ENCODE measurements at regions of chr19 and their contacts with region 1.

Region 1: DNA sequence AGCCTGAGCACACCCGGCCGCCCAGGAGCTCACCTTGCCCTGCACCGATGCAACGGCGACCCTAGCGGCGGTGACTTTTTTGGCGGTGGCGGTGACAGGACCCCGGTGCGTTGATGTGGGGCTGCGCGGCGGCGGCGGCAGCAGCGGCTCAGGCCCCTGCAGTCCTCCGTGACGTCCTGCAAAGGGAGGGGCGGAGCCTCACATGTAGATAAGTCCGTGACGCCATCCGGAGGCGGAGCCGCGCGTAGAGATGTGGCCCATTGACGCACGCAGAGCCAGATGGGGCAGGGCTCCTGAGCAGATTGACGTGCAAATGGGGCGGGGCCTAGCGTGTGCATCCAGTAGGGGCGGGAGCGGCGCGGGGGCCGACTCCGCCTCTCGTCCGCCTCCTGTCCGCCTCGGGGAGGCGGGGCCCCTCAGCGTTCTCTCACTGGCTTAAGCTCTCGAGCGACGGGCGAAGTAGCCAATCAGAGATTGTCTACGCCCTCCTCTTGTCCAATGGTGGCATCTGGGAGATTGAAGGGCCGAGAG is at the start of gene RAB3A:
- DNase-seq: peak; percentile 100
- ATAC-seq: peak; percentile 93
- H3K4me3 ChIP-seq: peak within 1 kb of the TSS; percentile 74 to 91 (median 80)
- H3K27ac ChIP-seq: peak within 1 kb of the TSS; percentile 98 to 100 (median 100)
- H3K4me1 ChIP-seq: peaks cover 6 to 19% of the 10 kb centered on the region in 2 donors
- H3K27me3 ChIP-seq: no peaks in the 10 kb centered on the region
- CTCF ChIP-seq: no peak
- POLR2A ChIP-seq: no peak
- total RNA-seq, gene RAB3A: 0.51 to 2.3 TPM in 2 of 4 donors, not detected in the others

Region 2: GRCh38 chr19:18007044-18007916 is 196.6 kb before region 1 on chr19:
- in situ Hi-C with region 1: no loop called
- intact Hi-C with region 1: loop called (anchors 5 kb)
- DNase-seq: peak; percentile 81 to 84
- ATAC-seq: peak; percentile 61 to 74
- H3K4me3 ChIP-seq: peak overlapping the region; percentile 74 to 99 (median 83)
- H3K27ac ChIP-seq: peak overlapping the region; percentile 89 to 100 (median 95)
- H3K4me1 ChIP-seq: peaks cover under 1 to 12% of the 10 kb centered on the region in 2 donors
- H3K27me3 ChIP-seq: peaks cover 0 to 2% (median 0%) of the 10 kb centered on the region in 3 donors
- CTCF ChIP-seq: peak; percentile 97 to 100 (median 99)
- POLR2A ChIP-seq: peak; percentile 76 to 90

Region 3: DNA sequence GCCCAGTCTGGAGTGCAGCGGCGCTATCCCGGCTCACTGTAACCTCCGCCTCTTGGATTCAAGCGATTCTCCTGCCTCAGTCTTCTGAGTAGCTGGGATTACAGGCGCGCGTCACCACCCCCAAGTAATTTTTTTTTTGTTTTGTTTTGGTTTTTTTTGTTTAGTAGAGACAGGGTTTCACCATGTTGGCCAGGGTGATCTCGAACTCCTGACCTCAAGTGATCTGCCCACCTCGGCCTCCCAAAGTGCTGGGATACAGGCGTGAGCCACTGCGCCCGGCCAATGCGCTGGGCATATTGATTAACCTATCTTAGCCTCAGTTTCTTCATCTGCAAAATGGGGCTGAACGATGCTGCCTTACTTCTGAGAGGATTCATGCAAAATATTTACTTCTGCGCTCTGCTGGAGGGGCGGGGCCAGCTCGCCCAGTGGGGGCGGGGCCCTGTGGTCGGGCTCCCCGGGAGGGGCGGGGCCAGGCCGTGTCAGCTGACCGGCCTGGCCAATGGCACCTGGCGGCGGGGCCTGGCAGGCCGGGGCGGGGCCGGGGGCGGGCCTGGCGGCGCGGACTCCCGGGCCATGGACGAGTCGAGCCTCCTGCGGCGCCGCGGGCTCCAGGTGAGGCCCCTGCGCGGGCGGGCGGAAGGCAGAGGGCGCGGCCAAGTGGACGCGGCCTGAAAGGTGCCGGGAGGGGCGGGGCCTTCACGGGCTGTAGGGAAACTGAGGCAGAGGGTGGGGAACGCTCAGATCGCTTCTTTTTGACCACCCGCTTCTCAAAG is 106.5 kb before region 1 on chr19 and contains the start of gene MAST3:
- in situ Hi-C with region 1: no loop called
- intact Hi-C with region 1: no loop called
- DNase-seq: peak; percentile 45 to 65
- ATAC-seq: peak; percentile 53 to 56
- H3K4me3 ChIP-seq: peak within 1 kb of the TSS in 2 of 4 donors; percentile 28 to 42
- H3K27ac ChIP-seq: no peak within 1 kb of the TSS
- H3K4me1 ChIP-seq: peaks cover 0 to 5% of the 10 kb centered on the region in 2 donors
- H3K27me3 ChIP-seq: peaks cover 36 to 67% (median 44%) of the 10 kb centered on the region in 3 donors
- CTCF ChIP-seq: no peak
- POLR2A ChIP-seq: no peak
- total RNA-seq, gene MAST3: 0.66 to 2.8 (median 1.6) TPM

Region 4: GRCh38 chr19:18192673-18193387 is 11.1 kb before region 1 on chr19 and contains the start of gene MPV17L2:
- in situ Hi-C with region 1: no loop called
- intact Hi-C with region 1: loop called (anchors 1 kb)
- DNase-seq: peak; percentile 100
- ATAC-seq: peak; percentile 96 to 97
- H3K4me3 ChIP-seq: peak within 1 kb of the TSS; percentile 75 to 89 (median 82)
- H3K27ac ChIP-seq: peak within 1 kb of the TSS; percentile 88 to 95 (median 94)
- H3K4me1 ChIP-seq: peaks cover 11 to 14% of the 10 kb centered on the region in 2 donors
- H3K27me3 ChIP-seq: no peaks in the 10 kb centered on the region
- CTCF ChIP-seq: no peak
- POLR2A ChIP-seq: peak; percentile 81 to 83
- total RNA-seq, gene MPV17L2: 18.1 to 38.9 (median 33.0) TPM

Region 5: GRCh38 chr19:18251587-18252369 is 47.9 kb after region 1 on chr19:
- in situ Hi-C with region 1: loop called in 1 of 4 experiments (anchors 5 kb)
- intact Hi-C with region 1: loop called (anchors 1 kb)
- DNase-seq: peak; percentile 15 to 66
- ATAC-seq: peak; percentile 84 to 87
- H3K4me3 ChIP-seq: no peak overlapping the region
- H3K27ac ChIP-seq: no peak overlapping the region
- H3K4me1 ChIP-seq: no peaks in the 10 kb centered on the region
- H3K27me3 ChIP-seq: no peaks in the 10 kb centered on the region
- CTCF ChIP-seq: peak; percentile 94 to 98 (median 97)
- POLR2A ChIP-seq: no peak

Region 6: GRCh38 chr19:18291590-18292461 is 87.9 kb after region 1 on chr19:
- in situ Hi-C with region 1: no loop called
- intact Hi-C with region 1: no loop called
- DNase-seq: peak; percentile 61 to 72
- ATAC-seq: peak; percentile 72
- H3K4me3 ChIP-seq: peak overlapping the region; percentile 67 to 88 (median 74)
- H3K27ac ChIP-seq: peak overlapping the region; percentile 86 to 98 (median 93)
- H3K4me1 ChIP-seq: peaks cover 5 to 9% of the 10 kb centered on the region in 2 donors
- H3K27me3 ChIP-seq: no peaks in the 10 kb centered on the region
- CTCF ChIP-seq: no peak
- POLR2A ChIP-seq: peak; percentile 46 to 79

Region 7: DNA sequence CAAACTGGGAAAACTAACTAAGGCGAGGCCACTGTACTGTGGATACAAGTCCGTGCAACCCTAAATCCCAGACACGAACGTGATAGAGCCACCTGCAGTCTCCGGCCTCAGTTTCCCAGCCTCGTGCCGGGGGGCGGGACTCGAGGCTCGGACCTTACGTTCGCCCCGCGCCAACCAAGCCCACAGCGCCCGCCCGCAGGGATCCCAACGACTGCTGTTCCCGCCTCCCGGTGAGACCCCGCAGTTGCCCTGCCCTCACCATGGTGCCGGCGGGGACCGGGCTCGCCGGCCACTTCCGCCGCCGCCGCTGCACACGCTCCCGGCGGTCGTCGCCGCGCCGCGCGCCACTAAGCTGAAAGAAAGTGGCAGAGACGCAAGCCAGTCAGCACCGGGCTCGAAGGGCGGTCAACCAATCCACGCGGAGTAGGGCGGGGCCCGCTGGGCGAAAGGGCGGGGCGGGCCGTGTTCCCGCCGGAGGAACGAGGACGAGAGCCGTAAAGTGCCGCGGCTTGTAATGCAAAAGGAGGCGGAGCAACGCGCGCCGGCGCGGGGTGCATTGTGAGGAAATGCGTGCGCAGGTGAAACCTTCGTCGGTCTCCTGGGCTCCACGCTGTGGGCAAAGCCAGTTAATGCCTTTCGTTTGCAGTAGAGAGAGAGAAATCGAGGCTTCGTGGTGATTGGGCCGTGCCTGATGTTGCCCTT is 119.0 kb after region 1 on chr19 and contains the start of gene LSM4:
- in situ Hi-C with region 1: loop called in 1 of 4 experiments (anchors 10 kb)
- intact Hi-C with region 1: loop called (anchors 5 kb)
- DNase-seq: peak; percentile 98 to 99
- ATAC-seq: peak; percentile 94 to 97
- H3K4me3 ChIP-seq: peak within 1 kb of the TSS; percentile 81 to 88 (median 82)
- H3K27ac ChIP-seq: peak within 1 kb of the TSS; percentile 91 to 97 (median 95)
- H3K4me1 ChIP-seq: peaks cover 40 to 45% of the 10 kb centered on the region in 2 donors
- H3K27me3 ChIP-seq: no peaks in the 10 kb centered on the region
- CTCF ChIP-seq: peak in 3 of 5 experiments; percentile 20 to 31 (median 25)
- POLR2A ChIP-seq: peak; percentile 90 to 91
- total RNA-seq, gene LSM4: 122 to 294 (median 193) TPM